GM10248 (cell line): ENCODE measurements at regions of chr7 and their contacts with region 1.

Region 1: GRCh38 chr7:148306759-148307158 is 283.8 kb upstream of the C7orf33 start:
- DNase-seq: peak; percentile 47
- CTCF ChIP-seq: no peak

Region 2: GRCh38 chr7:147999962-148000361 is 306.8 kb before region 1 on chr7:
- CTCF ChIA-PET with region 1: no interaction called
- POLR2A ChIA-PET with region 1: no interaction called
- DNase-seq: no peak
- CTCF ChIP-seq: no peak

Region 3: DNA sequence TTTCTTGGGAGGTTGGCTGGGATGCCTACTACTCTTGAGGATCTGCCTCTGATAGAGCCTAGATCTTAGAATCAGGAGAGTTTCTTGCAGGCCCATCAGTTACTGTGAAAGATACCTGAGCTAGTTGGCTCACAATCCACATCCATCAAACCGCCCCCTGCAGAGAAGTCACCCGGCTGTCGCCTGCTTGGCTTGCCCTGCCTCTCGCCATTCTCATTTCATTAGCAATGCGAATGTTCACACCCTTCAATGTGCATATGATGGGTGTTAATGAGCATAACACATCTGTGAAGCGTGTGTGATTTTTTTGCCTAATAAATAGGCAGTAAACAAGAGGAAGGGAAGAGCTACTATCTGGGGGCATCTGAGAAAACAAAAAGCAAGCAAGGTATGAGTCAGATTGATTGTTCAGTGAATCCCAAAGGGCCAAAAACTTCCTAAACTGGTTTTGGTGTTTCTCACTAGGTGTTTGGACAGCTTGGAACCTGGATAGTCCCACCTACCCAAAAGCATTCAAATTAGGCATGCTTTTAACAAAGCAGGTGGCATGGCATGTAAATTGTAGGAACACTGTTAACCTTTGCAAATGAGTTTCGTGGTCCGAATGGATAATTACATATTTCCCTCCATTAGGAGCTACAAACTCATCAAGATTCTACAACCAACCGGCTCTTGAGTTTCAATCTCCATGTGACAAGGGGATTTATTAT is 11.5 kb after region 1 on chr7:
- CTCF ChIA-PET with region 1: interaction called, 10 read pairs
- POLR2A ChIA-PET with region 1: no interaction called
- DNase-seq: no peak
- CTCF ChIP-seq: no peak